Tibial artery (tissue), 4 donors: ENCODE measurements at regions of chr5 and their contacts with region 1.

Region 1: GRCh38 chr5:142548739-142549275 is 137.1 kb downstream of the FGF1 start:
- DNase-seq: peak; percentile 70 to 74
- H3K4me3 ChIP-seq: no peak overlapping the region
- H3K27ac ChIP-seq: peak overlapping the region in 1 of 2 donors; percentile 2
- H3K4me1 ChIP-seq: peaks cover 0 to 29% (median 16%) of the 10 kb centered on the region in 4 donors
- H3K27me3 ChIP-seq: no peaks in the 10 kb centered on the region
- CTCF ChIP-seq: peak; percentile 68 to 72

Region 2: GRCh38 chr5:142151436-142152383 is 397.1 kb before region 1 on chr5:
- intact Hi-C with region 1: loop called (anchors 5 kb)
- DNase-seq: peak in 1 of 2 donors; percentile 57
- H3K4me3 ChIP-seq: no peak overlapping the region
- H3K27ac ChIP-seq: no peak overlapping the region
- H3K4me1 ChIP-seq: peaks cover 0 to 5% (median 2%) of the 10 kb centered on the region in 4 donors
- H3K27me3 ChIP-seq: no peaks in the 10 kb centered on the region
- CTCF ChIP-seq: peak; percentile 80 to 86

Region 3: DNA sequence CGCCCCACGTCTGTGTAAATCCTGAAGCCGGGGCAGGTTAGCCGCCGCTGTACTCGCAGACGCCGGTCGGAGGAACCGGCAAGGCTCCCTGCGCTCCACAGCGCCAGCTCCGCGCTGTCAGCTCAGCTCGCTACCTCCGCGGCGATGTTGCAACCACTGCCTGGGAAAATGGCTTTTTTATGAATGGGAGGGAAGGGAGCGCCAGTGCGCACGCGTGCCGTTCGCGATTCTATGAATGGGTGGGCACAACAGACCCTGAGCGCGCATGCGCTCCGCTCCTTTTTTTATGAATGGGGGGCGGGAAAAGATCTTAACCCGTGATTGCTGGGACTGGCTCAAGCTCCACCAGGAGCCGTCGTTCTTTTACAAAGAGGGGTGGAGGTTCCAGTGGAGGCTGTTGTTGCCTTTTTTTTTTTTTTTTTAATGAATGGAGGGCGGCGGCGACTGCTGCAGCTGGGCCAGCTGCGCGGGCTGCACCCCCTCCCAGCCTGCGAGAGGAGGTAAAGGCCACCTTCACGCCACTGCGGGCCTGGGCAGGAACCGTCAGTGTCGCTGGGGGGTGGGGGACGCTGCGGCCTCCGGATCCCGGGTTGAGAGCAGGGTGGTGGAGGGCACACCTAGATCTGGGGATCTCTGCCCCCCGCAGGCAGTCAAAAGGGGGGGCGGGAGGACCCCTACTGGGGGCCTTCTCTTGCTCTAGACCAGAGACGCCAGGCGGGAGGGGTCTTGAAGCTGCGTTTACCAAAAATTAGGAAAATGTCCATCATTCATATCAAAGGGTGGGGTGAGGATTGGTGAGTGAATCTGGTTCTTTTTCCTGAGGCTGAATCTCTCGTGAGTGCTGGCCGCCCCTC is 223.7 kb before region 1 on chr5 and contains the start of gene SPRY4:
- intact Hi-C with region 1: loop called (anchors 10 kb)
- DNase-seq: peak; percentile 93 to 96
- H3K4me3 ChIP-seq: peak within 1 kb of the TSS; percentile 69 to 81
- H3K27ac ChIP-seq: peak within 1 kb of the TSS; percentile 95 to 96
- H3K4me1 ChIP-seq: peaks cover 0 to 55% (median 39%) of the 10 kb centered on the region in 4 donors
- H3K27me3 ChIP-seq: no peaks in the 10 kb centered on the region
- CTCF ChIP-seq: no peak

Region 4: GRCh38 chr5:142356716-142357473 is 191.9 kb before region 1 on chr5:
- intact Hi-C with region 1: loop called (anchors 10 kb)
- DNase-seq: peak; percentile 89 to 91
- H3K4me3 ChIP-seq: peak overlapping the region; percentile 59 to 79
- H3K27ac ChIP-seq: peak overlapping the region; percentile 90 to 97
- H3K4me1 ChIP-seq: peaks cover 6 to 9% (median 8%) of the 10 kb centered on the region in 4 donors
- H3K27me3 ChIP-seq: no peaks in the 10 kb centered on the region
- CTCF ChIP-seq: no peak